ENCODE measurements at regions of chr18 and their contacts with region 1.

Region 1: GRCh38 chr18:54983041-54983686 is 23.9 kb upstream of the CCDC68 start:
- DNase-seq: peak; percentile 43 to 64 (median 48)
- ATAC-seq: peak; percentile 90
- H3K4me3 ChIP-seq: no peak overlapping the region
- H3K27ac ChIP-seq: no peak overlapping the region
- H3K4me1 ChIP-seq: no peaks in the 10 kb centered on the region
- H3K27me3 ChIP-seq: no peaks in the 10 kb centered on the region
- CTCF ChIP-seq: peak; percentile 41 to 57 (median 47); a peak in 4 of 6 replicates
- EP300 ChIP-seq: no peak
- POLR2A ChIP-seq: no peak
- RAD21 ChIP-seq: peak; percentile 70 to 86

Region 2: GRCh38 chr18:54444319-54444914 is 538.7 kb before region 1 on chr18:
- CTCF ChIA-PET with region 1: no interaction called
- POLR2A ChIA-PET with region 1: no interaction called
- in situ Hi-C with region 1: no loop called
- intact Hi-C with region 1: loop called (anchors 10 kb)
- DNase-seq: peak; percentile 26 to 50 (median 29)
- ATAC-seq: peak; percentile 81
- H3K4me3 ChIP-seq: no peak overlapping the region
- H3K27ac ChIP-seq: no peak overlapping the region
- H3K4me1 ChIP-seq: no peaks in the 10 kb centered on the region
- H3K27me3 ChIP-seq: no peaks in the 10 kb centered on the region; a peak in 1 of 5 replicates
- CTCF ChIP-seq: peak; percentile 57 to 69 (median 59); a peak in 5 of 6 replicates
- EP300 ChIP-seq: no peak
- POLR2A ChIP-seq: no peak
- RAD21 ChIP-seq: peak; percentile 74

Region 3: DNA sequence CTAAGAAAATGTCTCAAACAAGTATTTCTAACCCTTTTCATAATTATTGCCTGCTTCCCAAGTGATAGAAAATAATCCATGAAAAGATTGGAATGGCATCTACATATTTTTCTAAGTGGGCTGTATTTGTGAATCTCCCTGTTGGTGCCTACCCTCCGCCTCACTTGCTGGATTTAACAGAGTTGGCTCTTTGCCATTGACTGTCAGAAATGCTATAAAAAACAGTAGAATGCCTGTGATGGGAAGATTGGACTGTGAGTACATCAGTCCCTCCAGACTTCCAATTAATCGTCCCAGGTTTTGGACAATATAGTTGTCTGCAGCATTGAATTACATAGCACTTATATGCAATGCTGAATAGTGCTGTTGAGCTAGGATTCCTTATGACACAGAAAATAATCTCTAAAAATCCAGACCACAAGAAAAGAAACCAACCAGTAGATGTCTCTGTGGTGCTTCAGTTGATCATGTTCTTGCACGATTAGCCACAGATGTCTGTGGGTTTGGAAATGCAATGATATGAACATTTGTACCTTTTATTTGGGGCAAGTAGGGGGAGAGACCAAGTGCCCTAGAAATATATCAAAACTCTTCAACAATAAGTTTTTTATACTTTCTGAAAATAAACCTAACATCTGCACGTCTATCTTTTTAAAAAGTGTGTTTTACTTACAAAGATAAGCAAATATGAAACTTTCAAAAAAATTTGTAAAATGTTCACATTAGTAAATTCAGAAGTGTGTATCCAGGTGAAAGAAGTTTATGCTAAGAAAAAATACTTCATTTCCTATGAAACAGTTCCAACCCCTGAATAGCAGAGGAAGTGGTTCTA is 303.6 kb before region 1 on chr18:
- CTCF ChIA-PET with region 1: interaction called, 16 read pairs
- POLR2A ChIA-PET with region 1: no interaction called
- in situ Hi-C with region 1: loop called (anchors 5 kb)
- intact Hi-C with region 1: loop called (anchors 1 kb)
- DNase-seq: peak in 3 of 4 experiments; percentile 7 to 61 (median 30)
- ATAC-seq: peak; percentile 71; the same call in 2 of the 3 replicates
- H3K4me3 ChIP-seq: no peak overlapping the region
- H3K27ac ChIP-seq: no peak overlapping the region
- H3K4me1 ChIP-seq: no peaks in the 10 kb centered on the region
- H3K27me3 ChIP-seq: no peaks in the 10 kb centered on the region
- CTCF ChIP-seq: peak; percentile 37 to 63 (median 48); a peak in 4 of 6 replicates
- EP300 ChIP-seq: no peak
- POLR2A ChIP-seq: no peak
- RAD21 ChIP-seq: peak; percentile 88 to 91

Region 4: GRCh38 chr18:54916507-54916906 is 66.7 kb before region 1 on chr18:
- CTCF ChIA-PET with region 1: no interaction called
- POLR2A ChIA-PET with region 1: no interaction called
- in situ Hi-C with region 1: no loop called
- intact Hi-C with region 1: loop called (anchors 1 kb)
- DNase-seq: no peak
- ATAC-seq: no peak
- H3K4me3 ChIP-seq: no peak overlapping the region
- H3K27ac ChIP-seq: no peak overlapping the region
- H3K4me1 ChIP-seq: no peaks in the 10 kb centered on the region
- H3K27me3 ChIP-seq: no peaks in the 10 kb centered on the region
- CTCF ChIP-seq: peak in 2 of 3 experiments; percentile 14 to 20; a peak in 2 of 6 replicates
- EP300 ChIP-seq: no peak
- POLR2A ChIP-seq: no peak
- RAD21 ChIP-seq: peak in 1 of 2 experiments; percentile 48; a peak in 2 of 4 replicates

Region 5: GRCh38 chr18:55384551-55385275 is 401.5 kb after region 1 on chr18:
- CTCF ChIA-PET with region 1: no interaction called
- POLR2A ChIA-PET with region 1: no interaction called
- in situ Hi-C with region 1: no loop called
- intact Hi-C with region 1: no loop called
- DNase-seq: peak; percentile 34 to 57 (median 52)
- ATAC-seq: peak; percentile 53; the same call in 1 of the 3 replicates
- H3K4me3 ChIP-seq: no peak overlapping the region
- H3K27ac ChIP-seq: no peak overlapping the region
- H3K4me1 ChIP-seq: peaks cover 8 to 26% of the 10 kb centered on the region in 2 experiments
- H3K27me3 ChIP-seq: no peaks in the 10 kb centered on the region
- CTCF ChIP-seq: peak; percentile 62 to 64 (median 63)
- EP300 ChIP-seq: no peak
- POLR2A ChIP-seq: no peak
- RAD21 ChIP-seq: peak; percentile 15 to 62